RWPE1 (cell line): ENCODE measurements at regions of chr4 and their contacts with region 1.

Region 1: GRCh38 chr4:94226763-94227162 is 19.1 kb downstream of the SMARCAD1 start:
- DNase-seq: no peak
- H3K27ac ChIP-seq: no peak overlapping the region
- CTCF ChIP-seq: no peak

Region 2: DNA sequence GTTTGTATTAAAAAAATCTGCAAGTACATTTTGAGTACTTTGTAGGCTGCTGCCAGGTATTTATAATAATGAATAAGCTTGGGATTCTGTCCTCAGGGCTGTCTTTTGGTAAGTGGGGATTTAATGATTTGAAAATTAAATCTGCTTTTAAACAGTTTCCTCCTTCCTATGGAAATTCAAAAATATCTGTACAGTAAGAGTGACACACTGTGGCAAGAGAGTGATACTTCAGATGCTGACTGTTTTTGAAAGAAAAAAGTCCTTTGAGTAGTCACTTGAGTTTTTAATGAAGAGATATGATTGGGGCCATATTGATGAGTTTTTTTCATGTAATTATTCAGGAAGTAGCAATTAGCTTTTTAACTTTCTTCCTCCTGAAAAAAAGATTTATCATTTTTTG is 30.1 kb after region 1 on chr4:
- CTCF ChIA-PET with region 1: interaction called, 10 read pairs
- POLR2A ChIA-PET with region 1: no interaction called
- DNase-seq: no peak
- H3K27ac ChIP-seq: no peak overlapping the region
- CTCF ChIP-seq: peak; percentile 35; the same call in 1 of the 2 replicates